B cell (primary cell): ENCODE measurements at regions of chr17 and their contacts with region 1.

Region 1: DNA sequence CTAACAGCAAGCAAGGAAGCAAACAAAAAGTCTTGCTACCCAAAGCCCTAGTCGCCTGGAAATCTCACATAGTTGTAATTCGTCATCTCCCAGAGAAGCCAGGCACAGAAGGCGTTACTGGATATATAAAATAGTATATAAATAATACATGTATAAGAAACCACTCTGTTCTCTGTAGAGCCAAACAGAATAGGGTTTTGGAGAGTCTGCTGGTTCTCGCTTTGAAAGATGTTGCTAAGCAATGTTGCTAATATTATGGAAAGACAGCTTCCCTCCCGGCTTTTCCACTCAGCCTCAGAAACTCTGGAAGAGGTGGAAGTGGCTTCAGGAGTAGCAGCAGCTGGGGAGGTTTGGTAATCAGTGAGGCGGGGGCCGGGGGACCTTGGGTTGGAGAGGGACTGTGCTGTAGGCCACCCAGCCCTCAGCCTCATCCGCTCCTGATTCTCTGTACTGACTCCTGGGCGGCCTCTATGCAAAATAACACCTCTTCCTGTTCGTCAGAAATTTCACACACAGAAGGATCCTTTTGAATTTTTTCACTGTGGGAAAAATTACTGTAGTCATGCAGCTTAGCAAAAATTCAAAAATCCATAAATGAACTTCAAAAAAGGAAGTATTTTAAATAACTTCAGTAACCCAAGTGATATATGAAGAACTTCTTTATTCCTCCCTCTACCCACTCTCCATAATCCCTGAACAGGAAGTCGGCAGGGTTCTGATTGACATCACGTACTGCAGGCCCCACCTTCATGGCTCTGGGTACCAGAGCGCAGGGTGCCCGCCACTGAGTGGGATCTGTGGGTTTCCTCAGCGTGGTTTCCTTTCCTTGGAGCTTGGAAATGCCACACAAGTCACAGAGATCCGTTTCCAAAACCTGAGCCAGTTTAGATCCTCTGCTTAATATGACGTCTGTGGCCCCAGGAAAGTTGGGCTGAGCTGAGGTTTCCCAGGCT is 51.4 kb downstream of the RAP1GAP2 start:
- DNase-seq: no peak
- ATAC-seq: no peak
- H3K4me3 ChIP-seq: no peak overlapping the region
- H3K4me3 Mint-ChIP-seq: no peak overlapping the region
- H3K27ac ChIP-seq: no peak overlapping the region
- H3K27ac Mint-ChIP-seq: no peak overlapping the region
- H3K4me1 ChIP-seq: peaks cover 12 to 17% of the 10 kb centered on the region in 2 donors
- H3K4me1 Mint-ChIP-seq: peaks cover 16% of the 10 kb centered on the region
- H3K27me3 ChIP-seq: peaks cover 0 to 51% (median 9%) of the 10 kb centered on the region in 4 experiments
- H3K27me3 Mint-ChIP-seq: peaks cover 30% of the 10 kb centered on the region
- CTCF ChIP-seq: no peak

Region 2: DNA sequence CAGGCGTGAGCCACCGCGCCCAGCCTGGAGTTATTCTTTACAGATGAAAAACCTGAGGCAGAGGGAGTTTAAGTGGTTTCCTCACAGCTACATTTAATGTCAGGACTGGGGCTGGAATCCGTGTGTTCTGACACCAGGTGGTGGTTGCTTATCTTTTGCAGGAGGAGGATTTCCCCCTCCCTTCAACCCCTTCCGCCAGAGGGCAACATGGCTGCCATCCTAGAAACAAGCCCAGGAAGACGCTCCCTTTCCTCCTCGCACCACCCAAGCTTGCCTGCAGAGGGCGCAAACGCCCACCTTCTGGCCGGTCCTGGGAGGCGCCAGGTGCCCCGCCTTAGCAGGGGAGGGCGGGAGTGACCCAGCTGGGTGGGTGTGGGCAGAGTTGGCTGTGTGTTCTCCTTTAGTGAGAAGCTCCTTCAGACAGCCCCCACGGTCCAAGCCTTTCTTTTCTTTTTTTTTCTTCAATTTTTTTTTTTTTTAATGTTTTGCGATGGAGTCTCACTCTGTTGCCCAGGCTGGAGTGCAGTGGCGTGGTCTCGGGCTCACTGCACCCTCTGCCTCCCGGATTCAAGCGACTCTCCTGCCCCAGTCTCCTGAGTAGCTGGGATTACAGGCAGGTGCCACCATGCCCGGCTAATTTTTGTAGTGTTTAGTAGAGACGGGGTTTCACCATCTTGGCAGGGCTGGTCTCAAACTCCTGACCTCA is 61.3 kb before region 1 on chr17:
- CTCF ChIA-PET with region 1: interaction called, 42 read pairs
- POLR2A ChIA-PET with region 1: no interaction called
- intact Hi-C with region 1: no loop called
- DNase-seq: peak; percentile 95
- ATAC-seq: peak; percentile 99
- H3K4me3 ChIP-seq: no peak overlapping the region
- H3K4me3 Mint-ChIP-seq: peak overlapping the region; percentile 44
- H3K27ac ChIP-seq: no peak overlapping the region
- H3K27ac Mint-ChIP-seq: peak overlapping the region; percentile 41
- H3K4me1 ChIP-seq: peaks cover 18 to 29% of the 10 kb centered on the region in 2 donors
- H3K4me1 Mint-ChIP-seq: peaks cover 19% of the 10 kb centered on the region
- H3K27me3 ChIP-seq: peaks cover 0 to 15% (median 4%) of the 10 kb centered on the region in 4 experiments
- H3K27me3 Mint-ChIP-seq: no peaks in the 10 kb centered on the region
- CTCF ChIP-seq: peak; percentile 89

Region 3: DNA sequence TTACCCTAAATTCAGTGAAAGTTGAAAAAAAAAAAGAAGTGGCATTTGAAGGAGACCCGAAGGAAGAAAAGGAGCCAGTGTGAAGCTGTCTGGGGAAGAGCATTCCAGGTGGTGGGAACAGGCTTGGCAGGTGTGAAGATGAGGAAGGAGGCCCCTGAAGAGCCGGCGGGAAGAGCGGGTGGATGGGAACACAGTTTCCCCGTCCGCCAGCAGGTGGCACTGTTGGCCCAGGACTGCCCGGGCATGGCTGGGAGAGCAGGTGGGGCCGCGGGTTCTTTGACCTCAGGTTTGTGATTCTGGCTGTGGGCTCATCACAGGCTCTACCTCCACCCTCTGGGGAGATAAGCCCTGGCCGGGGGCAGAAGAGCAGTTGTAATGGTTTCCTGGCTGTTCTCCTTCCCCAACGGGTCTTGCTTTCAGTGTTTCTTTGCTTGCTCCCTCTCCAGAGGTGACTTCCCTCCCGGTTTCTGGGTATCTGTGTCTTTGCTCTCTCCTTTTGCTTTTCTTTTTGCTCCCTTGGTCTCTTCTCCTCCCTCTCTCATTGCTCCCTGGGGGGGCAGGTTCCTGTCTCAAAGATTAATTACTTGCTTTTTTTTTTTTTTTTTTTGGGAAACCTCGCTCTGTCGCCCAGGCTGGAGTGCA is 19.1 kb before region 1 on chr17:
- CTCF ChIA-PET with region 1: interaction called, 13 read pairs
- POLR2A ChIA-PET with region 1: no interaction called
- intact Hi-C with region 1: no loop called
- DNase-seq: peak; percentile 87
- ATAC-seq: peak; percentile 75
- H3K4me3 ChIP-seq: peak overlapping the region in 1 of 5 experiments; percentile 29
- H3K4me3 Mint-ChIP-seq: no peak overlapping the region
- H3K27ac ChIP-seq: no peak overlapping the region
- H3K27ac Mint-ChIP-seq: peak overlapping the region; percentile 39
- H3K4me1 ChIP-seq: peaks cover 20 to 40% of the 10 kb centered on the region in 2 donors
- H3K4me1 Mint-ChIP-seq: peaks cover 33% of the 10 kb centered on the region
- H3K27me3 ChIP-seq: peaks cover 0 to 22% (median 1%) of the 10 kb centered on the region in 4 experiments
- H3K27me3 Mint-ChIP-seq: peaks cover 2% of the 10 kb centered on the region
- CTCF ChIP-seq: peak; percentile 93

Region 4: GRCh38 chr17:2837147-2837561 is 10.5 kb before region 1 on chr17:
- CTCF ChIA-PET with region 1: interaction called, 15 read pairs
- POLR2A ChIA-PET with region 1: no interaction called
- intact Hi-C with region 1: loop called (anchors 1 kb)
- DNase-seq: peak; percentile 88
- ATAC-seq: peak; percentile 100
- H3K4me3 ChIP-seq: no peak overlapping the region
- H3K4me3 Mint-ChIP-seq: no peak overlapping the region
- H3K27ac ChIP-seq: no peak overlapping the region
- H3K27ac Mint-ChIP-seq: peak overlapping the region; percentile 68
- H3K4me1 ChIP-seq: peaks cover 8 to 9% of the 10 kb centered on the region in 2 donors
- H3K4me1 Mint-ChIP-seq: peaks cover 14% of the 10 kb centered on the region
- H3K27me3 ChIP-seq: peaks cover 0 to 41% (median 14%) of the 10 kb centered on the region in 4 experiments
- H3K27me3 Mint-ChIP-seq: peaks cover 25% of the 10 kb centered on the region
- CTCF ChIP-seq: peak; percentile 70

Region 5: DNA sequence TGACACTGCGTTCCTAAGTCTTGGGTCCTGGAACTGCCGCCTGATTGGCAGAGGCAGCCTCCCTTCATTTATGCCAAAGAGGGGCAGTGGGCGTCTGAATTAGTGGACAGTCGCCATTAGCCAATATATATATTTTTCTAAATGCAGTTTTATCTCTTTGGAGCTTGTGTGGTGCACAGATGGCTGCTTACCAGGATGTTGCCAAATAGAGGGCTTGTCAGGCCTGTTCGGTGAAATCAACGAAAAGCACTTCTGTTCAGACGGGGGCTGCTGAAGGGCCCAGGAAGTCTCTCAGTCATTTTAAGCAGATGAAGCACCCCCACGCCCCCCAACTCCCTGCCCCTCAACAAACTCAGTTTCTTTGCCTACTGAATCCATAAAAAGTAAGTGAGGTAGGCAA is 14.5 kb after region 1 on chr17:
- CTCF ChIA-PET with region 1: interaction called, 30 read pairs
- POLR2A ChIA-PET with region 1: no interaction called
- intact Hi-C with region 1: no loop called
- DNase-seq: no peak
- ATAC-seq: no peak
- H3K4me3 ChIP-seq: no peak overlapping the region
- H3K4me3 Mint-ChIP-seq: no peak overlapping the region
- H3K27ac ChIP-seq: no peak overlapping the region
- H3K27ac Mint-ChIP-seq: no peak overlapping the region
- H3K4me1 ChIP-seq: no peaks in the 10 kb centered on the region
- H3K4me1 Mint-ChIP-seq: no peaks in the 10 kb centered on the region
- H3K27me3 ChIP-seq: peaks cover 0 to 8% (median under 1%) of the 10 kb centered on the region in 4 experiments
- H3K27me3 Mint-ChIP-seq: peaks cover 3% of the 10 kb centered on the region
- CTCF ChIP-seq: no peak

Region 6: GRCh38 chr17:2867441-2868424 is 20.1 kb after region 1 on chr17:
- CTCF ChIA-PET with region 1: interaction called, 30 read pairs
- POLR2A ChIA-PET with region 1: no interaction called
- intact Hi-C with region 1: no loop called
- DNase-seq: no peak
- ATAC-seq: no peak
- H3K4me3 ChIP-seq: no peak overlapping the region
- H3K4me3 Mint-ChIP-seq: no peak overlapping the region
- H3K27ac ChIP-seq: no peak overlapping the region
- H3K27ac Mint-ChIP-seq: no peak overlapping the region
- H3K4me1 ChIP-seq: no peaks in the 10 kb centered on the region
- H3K4me1 Mint-ChIP-seq: no peaks in the 10 kb centered on the region
- H3K27me3 ChIP-seq: no peaks in the 10 kb centered on the region
- H3K27me3 Mint-ChIP-seq: no peaks in the 10 kb centered on the region
- CTCF ChIP-seq: no peak

Region 7: DNA sequence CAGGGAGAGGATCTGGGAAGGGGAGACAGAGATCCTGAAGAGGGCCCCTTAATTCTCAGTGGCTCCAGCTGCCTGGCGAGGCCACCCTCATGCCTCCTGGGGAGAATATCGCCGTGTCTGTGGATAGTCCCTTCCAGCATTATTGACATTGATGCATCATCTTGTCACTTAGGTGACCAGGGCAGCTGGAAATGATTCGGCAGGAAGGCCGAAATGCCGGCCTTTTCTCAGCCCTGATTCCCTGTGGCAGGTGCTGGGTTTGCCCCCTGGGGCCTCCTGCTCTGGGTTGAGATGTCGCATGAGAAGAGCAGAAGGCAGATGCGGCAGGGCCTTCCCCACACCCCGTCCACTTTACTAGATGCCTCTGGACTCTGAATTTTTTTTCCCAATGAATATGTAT is 38.1 kb after region 1 on chr17:
- CTCF ChIA-PET with region 1: no interaction called
- POLR2A ChIA-PET with region 1: no interaction called
- intact Hi-C with region 1: no loop called
- DNase-seq: no peak
- ATAC-seq: no peak
- H3K4me3 ChIP-seq: no peak overlapping the region
- H3K4me3 Mint-ChIP-seq: no peak overlapping the region
- H3K27ac ChIP-seq: no peak overlapping the region
- H3K27ac Mint-ChIP-seq: no peak overlapping the region
- H3K4me1 ChIP-seq: no peaks in the 10 kb centered on the region
- H3K4me1 Mint-ChIP-seq: peaks cover 11% of the 10 kb centered on the region
- H3K27me3 ChIP-seq: no peaks in the 10 kb centered on the region
- H3K27me3 Mint-ChIP-seq: no peaks in the 10 kb centered on the region
- CTCF ChIP-seq: no peak

Region 8: DNA sequence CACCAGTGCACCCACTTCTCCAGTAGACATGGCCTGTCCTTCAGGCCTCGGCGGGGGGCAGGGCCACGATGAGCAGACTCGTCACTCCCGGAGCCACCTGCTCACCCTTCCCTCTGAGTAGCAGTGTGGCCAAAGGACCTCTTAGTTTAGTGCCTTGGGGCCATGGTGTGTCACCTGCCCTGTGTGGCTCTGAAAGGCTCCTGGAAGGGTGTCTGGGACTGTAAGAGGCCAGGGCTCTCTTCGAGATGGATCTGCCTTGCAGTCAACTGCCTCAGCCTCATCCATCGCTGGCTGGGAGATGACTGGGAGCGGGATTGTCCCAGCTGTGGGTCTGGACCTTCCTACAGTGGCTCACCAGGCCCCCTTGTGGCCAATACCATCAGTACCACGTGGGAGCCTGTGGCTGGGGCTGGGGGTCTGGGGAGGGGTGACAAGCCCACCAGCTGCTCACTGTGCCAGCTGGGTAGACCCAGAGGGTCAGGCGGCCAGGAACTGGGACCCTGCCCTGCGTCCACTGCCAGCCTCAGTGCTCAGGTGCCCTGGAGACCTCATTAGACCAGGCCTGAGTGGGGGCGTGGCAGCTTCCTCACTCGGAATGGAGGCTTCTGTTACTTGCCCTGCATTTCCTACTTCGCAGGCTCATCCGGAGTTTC is 82.3 kb after region 1 on chr17:
- CTCF ChIA-PET with region 1: interaction called, 21 read pairs
- POLR2A ChIA-PET with region 1: no interaction called
- intact Hi-C with region 1: loop called (anchors 5 kb)
- DNase-seq: peak; percentile 47
- ATAC-seq: peak; percentile 34
- H3K4me3 ChIP-seq: no peak overlapping the region
- H3K4me3 Mint-ChIP-seq: no peak overlapping the region
- H3K27ac ChIP-seq: no peak overlapping the region
- H3K27ac Mint-ChIP-seq: no peak overlapping the region
- H3K4me1 ChIP-seq: peaks cover 24 to 28% of the 10 kb centered on the region in 2 donors
- H3K4me1 Mint-ChIP-seq: peaks cover 28% of the 10 kb centered on the region
- H3K27me3 ChIP-seq: peaks cover 0 to 4% (median 1%) of the 10 kb centered on the region in 4 experiments
- H3K27me3 Mint-ChIP-seq: peaks cover 5% of the 10 kb centered on the region
- CTCF ChIP-seq: peak; percentile 75